Uterus (tissue), 4 donors: ENCODE measurements at regions of chr12 and their contacts with region 1.

Region 1: GRCh38 chr12:116599285-116600136 is 40.3 kb downstream of the MAP1LC3B2 start:
- DNase-seq: peak; percentile 88 to 89
- H3K4me3 ChIP-seq: peak overlapping the region; percentile 19 to 20
- H3K27ac ChIP-seq: peak overlapping the region; percentile 86 to 88
- H3K4me1 ChIP-seq: peaks cover 0 to 4% of the 10 kb centered on the region in 2 donors
- H3K27me3 ChIP-seq: no peaks in the 10 kb centered on the region
- CTCF ChIP-seq: peak; percentile 36 to 81 (median 70)
- POLR2A ChIP-seq: no peak

Region 2: DNA sequence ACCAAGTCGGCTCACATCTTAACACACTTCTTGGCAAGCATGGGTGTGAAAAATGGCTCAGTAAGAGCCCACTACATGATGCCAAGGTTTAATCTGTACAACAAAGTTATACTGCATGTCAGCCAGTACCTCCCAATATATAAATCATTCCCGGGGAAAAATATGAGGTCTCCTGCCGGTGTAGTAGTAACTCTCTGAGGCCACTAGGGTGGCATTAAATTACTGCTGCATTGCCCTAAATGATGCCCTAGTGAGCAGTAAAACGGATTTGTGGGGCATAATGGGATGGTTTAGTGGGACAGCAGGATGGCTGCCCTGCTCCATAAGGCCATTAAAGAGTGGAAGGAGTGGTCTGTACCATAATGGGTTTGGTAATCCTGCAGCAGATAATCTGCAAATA is 589.7 kb before region 1 on chr12:
- intact Hi-C with region 1: loop called (anchors 10 kb)
- DNase-seq: no peak
- H3K4me3 ChIP-seq: no peak overlapping the region
- H3K27ac ChIP-seq: no peak overlapping the region
- H3K4me1 ChIP-seq: no peaks in the 10 kb centered on the region
- H3K27me3 ChIP-seq: no peaks in the 10 kb centered on the region
- CTCF ChIP-seq: no peak
- POLR2A ChIP-seq: no peak

Region 3: DNA sequence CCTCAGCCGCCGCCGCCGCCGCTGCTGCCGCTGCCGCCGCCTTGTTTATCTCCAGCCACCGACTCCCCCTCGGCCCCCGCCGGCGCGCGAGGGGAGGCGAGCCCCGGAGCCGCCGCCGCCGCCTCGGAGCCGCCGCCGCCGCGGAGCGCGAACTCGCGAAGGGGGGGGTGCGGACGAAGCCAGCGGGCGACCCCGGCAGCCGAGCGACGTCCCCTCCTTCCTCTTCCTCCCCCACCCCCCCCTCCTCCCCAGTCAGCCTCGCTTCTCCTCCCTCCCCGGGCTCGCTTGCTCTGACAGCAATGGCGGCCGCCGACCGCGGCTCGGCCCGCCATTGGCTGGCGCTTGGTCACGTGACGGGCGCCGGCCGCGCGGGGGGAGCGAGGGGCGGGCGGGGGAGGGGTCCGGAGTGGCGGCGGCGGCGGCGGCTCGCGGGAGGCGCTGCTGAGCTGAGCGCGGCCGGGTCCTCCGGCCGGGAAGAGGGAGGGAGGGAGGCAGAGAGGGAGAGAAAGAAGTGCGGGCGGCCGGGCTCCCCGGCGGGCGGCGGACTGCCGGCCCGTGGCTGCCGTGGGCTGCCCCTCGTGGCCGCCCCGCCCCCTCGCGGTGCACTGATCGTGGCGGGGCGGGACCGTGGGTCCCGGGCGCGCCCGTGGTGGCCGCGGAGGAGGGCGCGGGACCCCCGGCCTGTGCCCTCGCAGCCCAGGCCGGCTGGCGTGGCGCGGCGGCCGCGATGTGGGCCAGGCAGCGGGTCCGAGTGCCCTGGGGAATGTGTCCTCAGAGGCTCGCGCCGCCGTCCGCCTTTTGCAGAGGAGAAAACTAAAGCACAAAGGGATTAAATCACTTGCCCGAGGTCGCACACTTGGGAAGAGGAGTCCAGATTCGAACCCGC is 321.9 kb before region 1 on chr12 and contains the start of gene MED13L:
- intact Hi-C with region 1: loop called (anchors 10 kb)
- DNase-seq: peak; percentile 86 to 91
- H3K4me3 ChIP-seq: peak within 1 kb of the TSS; percentile 84 to 94
- H3K27ac ChIP-seq: peak within 1 kb of the TSS; percentile 98 to 99
- H3K4me1 ChIP-seq: peaks cover 0 to 5% of the 10 kb centered on the region in 2 donors
- H3K27me3 ChIP-seq: no peaks in the 10 kb centered on the region
- CTCF ChIP-seq: peak in 3 of 4 experiments; percentile 28 to 84 (median 57)
- POLR2A ChIP-seq: peak; percentile 30 to 65
- total RNA-seq, gene MED13L: 189 to 314 (median 254) TPM

Region 4: DNA sequence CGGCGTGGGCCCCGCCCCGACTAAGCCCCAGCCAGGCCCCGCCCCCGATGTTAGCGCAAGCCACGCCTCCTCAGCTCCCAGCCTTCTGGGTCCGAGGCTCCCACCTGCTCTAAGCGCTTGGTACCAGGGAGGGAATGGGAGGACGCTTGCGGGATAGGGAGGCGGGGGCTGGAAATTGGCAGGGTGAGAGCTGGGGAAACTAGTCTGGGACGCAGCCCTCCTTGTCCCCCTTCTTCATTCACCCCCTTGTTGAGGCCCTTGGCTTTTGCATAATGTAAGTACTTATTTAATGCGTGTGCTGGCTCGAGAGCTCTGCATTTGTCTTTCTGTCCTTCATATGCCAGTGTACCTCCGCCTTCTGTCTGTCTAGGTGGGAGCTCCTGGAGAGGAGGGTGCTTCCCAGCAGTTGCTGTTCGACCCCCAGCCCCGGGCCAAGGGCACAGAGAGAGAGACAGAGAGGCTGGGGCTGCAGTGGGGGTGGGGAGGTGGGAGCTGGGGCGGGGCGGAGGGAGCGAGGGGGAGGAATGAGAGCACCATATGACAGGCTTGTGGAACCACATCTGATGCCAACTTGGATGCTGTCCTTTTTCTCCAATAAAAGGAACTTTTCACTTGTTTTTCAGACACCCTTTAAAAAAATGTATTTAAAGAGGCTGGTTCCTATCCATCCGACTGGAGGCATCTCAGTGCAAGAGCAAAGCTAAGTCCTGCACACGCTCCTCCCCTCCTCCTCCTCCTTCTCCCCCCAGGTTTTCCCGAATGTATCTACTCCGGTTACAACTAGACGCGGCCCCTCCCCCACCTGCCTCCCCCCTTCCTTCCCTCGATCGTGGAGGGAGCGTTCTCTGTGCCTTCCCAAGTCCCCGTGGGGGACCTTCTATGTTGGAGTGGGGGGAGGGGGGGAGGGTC is 65.9 kb before region 1 on chr12:
- intact Hi-C with region 1: loop called (anchors 10 kb)
- DNase-seq: peak; percentile 85 to 94
- H3K4me3 ChIP-seq: peak overlapping the region; percentile 47 to 49
- H3K27ac ChIP-seq: peak overlapping the region; percentile 87 to 90
- H3K4me1 ChIP-seq: peaks cover 0 to 4% of the 10 kb centered on the region in 2 donors
- H3K27me3 ChIP-seq: no peaks in the 10 kb centered on the region
- CTCF ChIP-seq: no peak
- POLR2A ChIP-seq: peak; percentile 16 to 47